CD8-positive, alpha-beta T cell (primary cell): ENCODE measurements at regions of chr10 and their contacts with region 1.

Region 1: DNA sequence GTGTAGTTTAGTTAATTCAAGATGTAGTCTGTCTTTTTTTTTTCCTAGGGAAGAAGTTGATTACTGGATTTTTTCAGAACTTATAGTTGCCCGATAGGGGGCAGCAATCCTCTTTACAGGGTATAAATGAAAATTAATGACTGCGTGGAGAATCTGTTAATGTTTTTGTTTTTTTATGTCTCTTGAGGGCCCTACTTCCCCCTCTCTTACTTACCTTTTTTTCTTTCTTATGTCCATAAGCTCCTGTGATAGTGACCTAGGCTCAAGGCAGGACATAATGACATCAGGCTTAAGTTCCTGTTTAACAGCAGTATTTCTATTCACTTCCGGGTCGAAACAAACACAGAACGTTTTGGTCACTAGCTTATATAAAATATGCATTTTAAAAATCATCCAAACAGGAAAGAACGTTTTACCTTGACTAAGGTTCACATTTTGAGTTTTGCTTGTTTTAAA is 18.8 kb downstream of the CDC123 start:
- DNase-seq: peak in 6 of 9 experiments; percentile 10 to 75 (median 52)
- ATAC-seq: peak; percentile 44
- H3K4me3 ChIP-seq: peak overlapping the region in 1 of 2 experiments; percentile 24
- H3K4me3 Mint-ChIP-seq: peak overlapping the region; percentile 69
- H3K27ac ChIP-seq: peak overlapping the region in 1 of 2 experiments; percentile 51
- H3K27ac Mint-ChIP-seq: peak overlapping the region; percentile 87
- H3K4me1 ChIP-seq: peaks cover 5% of the 10 kb centered on the region
- H3K4me1 Mint-ChIP-seq: peaks cover 17% of the 10 kb centered on the region
- H3K27me3 ChIP-seq: no peaks in the 10 kb centered on the region
- H3K27me3 Mint-ChIP-seq: no peaks in the 10 kb centered on the region
- CTCF ChIP-seq: peak; percentile 73

Region 2: DNA sequence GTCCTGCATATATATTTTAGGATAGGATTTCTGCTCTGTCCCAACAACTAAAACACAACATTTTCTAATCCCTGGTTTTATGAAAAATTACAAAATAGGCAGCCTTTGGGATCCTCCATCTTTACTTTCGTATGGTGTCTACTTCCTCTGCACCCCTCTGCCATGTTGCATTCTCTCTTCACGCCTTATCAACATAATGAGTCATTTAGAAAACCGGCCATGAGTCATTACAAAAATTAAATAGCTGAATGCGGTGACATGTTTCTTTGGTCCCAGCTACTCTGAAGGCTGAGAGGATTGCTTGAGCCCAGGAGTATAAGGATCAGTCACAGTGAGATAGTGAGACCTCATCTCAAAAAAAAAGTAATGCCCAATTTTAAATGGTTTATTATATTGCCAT is 1345.2 kb before region 1 on chr10:
- CTCF ChIA-PET with region 1: no interaction called
- POLR2A ChIA-PET with region 1: no interaction called
- intact Hi-C with region 1: no loop called
- DNase-seq: no peak
- ATAC-seq: no peak
- H3K4me3 ChIP-seq: no peak overlapping the region
- H3K4me3 Mint-ChIP-seq: no peak overlapping the region
- H3K27ac ChIP-seq: no peak overlapping the region
- H3K27ac Mint-ChIP-seq: no peak overlapping the region
- H3K4me1 ChIP-seq: no peaks in the 10 kb centered on the region
- H3K4me1 Mint-ChIP-seq: no peaks in the 10 kb centered on the region
- H3K27me3 ChIP-seq: no peaks in the 10 kb centered on the region
- H3K27me3 Mint-ChIP-seq: peaks cover 16% of the 10 kb centered on the region
- CTCF ChIP-seq: no peak

Region 3: GRCh38 chr10:12158111-12158510 is 56.7 kb before region 1 on chr10:
- CTCF ChIA-PET with region 1: no interaction called
- POLR2A ChIA-PET with region 1: no interaction called
- intact Hi-C with region 1: no loop called
- DNase-seq: no peak
- ATAC-seq: no peak
- H3K4me3 ChIP-seq: no peak overlapping the region
- H3K4me3 Mint-ChIP-seq: no peak overlapping the region
- H3K27ac ChIP-seq: no peak overlapping the region
- H3K27ac Mint-ChIP-seq: no peak overlapping the region
- H3K4me1 ChIP-seq: no peaks in the 10 kb centered on the region
- H3K4me1 Mint-ChIP-seq: no peaks in the 10 kb centered on the region
- H3K27me3 ChIP-seq: no peaks in the 10 kb centered on the region
- H3K27me3 Mint-ChIP-seq: no peaks in the 10 kb centered on the region
- CTCF ChIP-seq: no peak

Region 4: GRCh38 chr10:12201543-12201942 is 13.2 kb before region 1 on chr10:
- CTCF ChIA-PET with region 1: interaction called, 33 read pairs
- POLR2A ChIA-PET with region 1: interaction called, 4 read pairs
- intact Hi-C with region 1: no loop called
- DNase-seq: no peak
- ATAC-seq: no peak
- H3K4me3 ChIP-seq: no peak overlapping the region
- H3K4me3 Mint-ChIP-seq: peak overlapping the region; percentile 23
- H3K27ac ChIP-seq: no peak overlapping the region
- H3K27ac Mint-ChIP-seq: peak overlapping the region; percentile 60
- H3K4me1 ChIP-seq: peaks cover 29% of the 10 kb centered on the region
- H3K4me1 Mint-ChIP-seq: peaks cover 58% of the 10 kb centered on the region
- H3K27me3 ChIP-seq: no peaks in the 10 kb centered on the region
- H3K27me3 Mint-ChIP-seq: no peaks in the 10 kb centered on the region
- CTCF ChIP-seq: no peak

Region 5: GRCh38 chr10:12225444-12225843 is 10.7 kb after region 1 on chr10:
- CTCF ChIA-PET with region 1: interaction called, 20 read pairs
- POLR2A ChIA-PET with region 1: interaction called, 3 read pairs
- intact Hi-C with region 1: no loop called
- DNase-seq: no peak
- ATAC-seq: no peak
- H3K4me3 ChIP-seq: no peak overlapping the region
- H3K4me3 Mint-ChIP-seq: no peak overlapping the region
- H3K27ac ChIP-seq: no peak overlapping the region
- H3K27ac Mint-ChIP-seq: no peak overlapping the region
- H3K4me1 ChIP-seq: no peaks in the 10 kb centered on the region
- H3K4me1 Mint-ChIP-seq: peaks cover 3% of the 10 kb centered on the region
- H3K27me3 ChIP-seq: no peaks in the 10 kb centered on the region
- H3K27me3 Mint-ChIP-seq: no peaks in the 10 kb centered on the region
- CTCF ChIP-seq: no peak

Region 6: GRCh38 chr10:12235796-12236195 is 21.0 kb after region 1 on chr10:
- CTCF ChIA-PET with region 1: interaction called, 11 read pairs
- POLR2A ChIA-PET with region 1: no interaction called
- intact Hi-C with region 1: no loop called
- DNase-seq: no peak
- ATAC-seq: no peak
- H3K4me3 ChIP-seq: no peak overlapping the region
- H3K4me3 Mint-ChIP-seq: no peak overlapping the region
- H3K27ac ChIP-seq: no peak overlapping the region
- H3K27ac Mint-ChIP-seq: no peak overlapping the region
- H3K4me1 ChIP-seq: no peaks in the 10 kb centered on the region
- H3K4me1 Mint-ChIP-seq: no peaks in the 10 kb centered on the region
- H3K27me3 ChIP-seq: no peaks in the 10 kb centered on the region
- H3K27me3 Mint-ChIP-seq: no peaks in the 10 kb centered on the region
- CTCF ChIP-seq: no peak

Region 7: GRCh38 chr10:12710594-12711349 is 496.0 kb after region 1 on chr10:
- CTCF ChIA-PET with region 1: interaction called, 30 read pairs
- POLR2A ChIA-PET with region 1: no interaction called
- intact Hi-C with region 1: loop called (anchors 1 kb)
- DNase-seq: peak; percentile 56 to 83 (median 73)
- ATAC-seq: peak; percentile 93
- H3K4me3 ChIP-seq: no peak overlapping the region
- H3K4me3 Mint-ChIP-seq: no peak overlapping the region
- H3K27ac ChIP-seq: no peak overlapping the region
- H3K27ac Mint-ChIP-seq: no peak overlapping the region
- H3K4me1 ChIP-seq: no peaks in the 10 kb centered on the region
- H3K4me1 Mint-ChIP-seq: peaks cover 4% of the 10 kb centered on the region
- H3K27me3 ChIP-seq: no peaks in the 10 kb centered on the region
- H3K27me3 Mint-ChIP-seq: no peaks in the 10 kb centered on the region
- CTCF ChIP-seq: peak; percentile 90

Region 8: DNA sequence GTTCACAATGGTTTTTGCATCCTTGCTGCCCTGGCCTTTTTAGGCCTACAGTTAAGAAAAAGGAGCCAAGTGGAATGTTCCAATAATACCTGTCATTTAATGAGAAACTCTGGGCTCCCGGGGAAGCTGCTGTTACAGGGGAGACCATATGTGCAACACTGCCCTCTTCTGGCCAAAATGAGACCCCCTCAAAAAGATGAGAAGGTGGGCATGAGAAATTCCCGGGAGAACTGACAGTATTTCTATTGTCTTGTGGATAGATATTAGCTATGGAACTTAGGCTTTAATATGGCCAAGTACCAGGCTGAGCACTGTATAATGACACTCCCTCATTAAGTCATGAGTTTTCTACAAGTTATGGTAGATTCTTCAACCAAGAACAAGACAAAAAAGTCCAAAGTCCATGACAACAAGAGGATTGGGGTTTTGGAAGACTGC is 687.4 kb after region 1 on chr10:
- CTCF ChIA-PET with region 1: no interaction called
- POLR2A ChIA-PET with region 1: no interaction called
- intact Hi-C with region 1: loop called in 1 of 2 experiments (anchors 1 kb)
- DNase-seq: peak in 8 of 9 experiments; percentile 12 to 68 (median 48)
- ATAC-seq: no peak
- H3K4me3 ChIP-seq: no peak overlapping the region
- H3K4me3 Mint-ChIP-seq: no peak overlapping the region
- H3K27ac ChIP-seq: no peak overlapping the region
- H3K27ac Mint-ChIP-seq: no peak overlapping the region
- H3K4me1 ChIP-seq: no peaks in the 10 kb centered on the region
- H3K4me1 Mint-ChIP-seq: no peaks in the 10 kb centered on the region
- H3K27me3 ChIP-seq: no peaks in the 10 kb centered on the region
- H3K27me3 Mint-ChIP-seq: peaks cover 10% of the 10 kb centered on the region
- CTCF ChIP-seq: peak; percentile 67